A673 (cell line): ENCODE measurements at regions of chr12 and their contacts with region 1.

Region 1: DNA sequence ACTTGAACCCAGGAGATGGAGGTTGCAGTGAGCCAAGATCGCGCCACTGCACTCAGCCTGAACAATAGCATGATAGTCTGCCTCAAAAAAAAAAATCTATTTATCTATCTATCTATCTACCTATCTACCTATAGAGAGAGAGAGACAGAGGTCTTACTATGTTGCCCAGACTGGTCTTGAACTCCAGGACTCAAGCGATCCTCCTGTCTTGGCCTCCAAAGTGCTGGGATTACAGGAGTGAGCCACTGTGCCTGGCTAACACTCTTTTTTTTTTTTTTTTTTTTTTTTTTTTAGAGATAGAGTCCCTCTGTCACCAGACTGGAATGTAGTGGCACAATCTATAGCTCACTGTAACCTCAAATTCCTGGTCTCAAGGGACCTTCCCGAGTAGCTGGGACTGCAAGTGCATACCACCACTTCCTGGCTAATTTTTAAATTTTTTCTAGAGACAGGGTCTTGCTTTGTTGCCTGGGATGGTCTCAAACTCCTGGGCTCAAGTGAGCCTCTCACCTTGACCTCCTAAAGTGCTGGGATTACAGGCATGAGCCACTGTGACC is 1.9 kb downstream of the FAM186A start:
- DNase-seq: peak; percentile 47
- H3K4me3 ChIP-seq: no peak overlapping the region
- H3K27ac ChIP-seq: no peak overlapping the region
- H3K4me1 ChIP-seq: no peaks in the 10 kb centered on the region
- H3K27me3 ChIP-seq: no peaks in the 10 kb centered on the region
- CTCF ChIP-seq: no peak

Region 2: DNA sequence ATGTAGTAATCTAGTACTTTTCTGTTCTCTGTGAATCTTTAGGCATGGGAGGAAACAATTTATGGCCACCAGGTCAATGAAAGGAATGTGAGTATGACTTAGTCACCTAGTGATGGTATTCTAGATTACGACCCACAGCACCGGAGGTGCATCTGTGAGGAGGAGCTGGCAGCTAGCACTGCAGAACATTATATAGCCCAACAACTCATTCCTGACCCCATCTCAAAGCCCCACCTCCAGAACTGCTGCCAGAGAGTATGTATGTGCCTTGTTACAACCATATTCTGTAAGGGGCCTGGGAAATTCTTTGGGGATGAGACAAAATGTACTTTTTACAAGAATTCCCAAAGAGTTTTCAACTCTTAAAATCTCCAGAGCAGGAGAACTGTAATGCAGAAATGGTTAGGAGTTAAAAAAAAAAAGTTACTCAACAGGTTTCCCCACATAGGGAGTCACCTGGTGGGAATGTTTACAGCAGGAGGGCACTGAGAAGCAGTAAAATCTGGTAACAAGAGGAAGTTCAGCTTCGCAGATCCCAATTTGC is 192.5 kb before region 1 on chr12:
- CTCF ChIA-PET with region 1: no interaction called
- POLR2A ChIA-PET with region 1: no interaction called
- intact Hi-C with region 1: no loop called
- DNase-seq: no peak
- H3K4me3 ChIP-seq: no peak overlapping the region
- H3K27ac ChIP-seq: no peak overlapping the region
- H3K4me1 ChIP-seq: no peaks in the 10 kb centered on the region
- H3K27me3 ChIP-seq: no peaks in the 10 kb centered on the region
- CTCF ChIP-seq: no peak

Region 3: DNA sequence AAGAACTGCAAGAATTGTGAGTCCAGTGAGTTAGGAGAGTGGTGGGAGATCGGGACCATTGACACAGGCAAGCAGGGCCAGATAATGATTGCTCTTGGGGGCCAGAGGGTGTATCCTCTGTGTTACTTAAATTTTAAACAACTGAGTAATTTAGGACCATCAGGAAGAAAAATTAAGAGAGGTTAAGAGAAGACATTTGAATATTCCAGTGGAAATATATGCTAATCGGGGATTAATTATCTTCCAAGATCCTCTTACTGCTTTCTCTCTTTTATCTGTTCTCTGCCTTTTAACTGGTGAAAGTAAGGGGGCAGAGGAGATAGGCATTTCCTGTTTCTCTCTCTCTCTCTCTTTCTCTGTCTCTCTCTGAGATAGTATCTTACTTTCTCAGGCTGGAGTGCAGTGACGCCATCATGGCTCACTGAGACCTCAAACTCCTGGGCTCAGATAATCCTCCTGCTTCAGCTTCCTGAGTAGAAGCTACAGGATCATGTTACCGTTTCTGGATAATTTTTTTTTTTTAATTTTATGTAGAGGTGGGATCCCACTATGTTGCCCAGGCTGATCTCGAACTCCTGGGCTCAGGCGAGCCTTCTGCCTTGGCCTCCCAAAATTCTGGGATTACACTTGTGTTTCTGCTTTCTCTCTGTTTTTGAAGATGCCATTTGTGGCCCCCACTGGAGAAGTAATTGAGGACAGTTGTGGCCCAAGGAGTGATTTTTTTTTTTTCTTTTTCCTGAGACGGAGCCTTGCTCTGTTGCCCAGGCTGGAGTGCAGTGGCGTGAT is 195.3 kb after region 1 on chr12:
- CTCF ChIA-PET with region 1: no interaction called
- POLR2A ChIA-PET with region 1: interaction called, 13 read pairs
- intact Hi-C with region 1: no loop called
- DNase-seq: peak; percentile 97
- H3K4me3 ChIP-seq: peak overlapping the region; percentile 9
- H3K27ac ChIP-seq: peak overlapping the region; percentile 95
- H3K4me1 ChIP-seq: peaks cover 37% of the 10 kb centered on the region
- H3K27me3 ChIP-seq: no peaks in the 10 kb centered on the region
- CTCF ChIP-seq: no peak

Region 4: DNA sequence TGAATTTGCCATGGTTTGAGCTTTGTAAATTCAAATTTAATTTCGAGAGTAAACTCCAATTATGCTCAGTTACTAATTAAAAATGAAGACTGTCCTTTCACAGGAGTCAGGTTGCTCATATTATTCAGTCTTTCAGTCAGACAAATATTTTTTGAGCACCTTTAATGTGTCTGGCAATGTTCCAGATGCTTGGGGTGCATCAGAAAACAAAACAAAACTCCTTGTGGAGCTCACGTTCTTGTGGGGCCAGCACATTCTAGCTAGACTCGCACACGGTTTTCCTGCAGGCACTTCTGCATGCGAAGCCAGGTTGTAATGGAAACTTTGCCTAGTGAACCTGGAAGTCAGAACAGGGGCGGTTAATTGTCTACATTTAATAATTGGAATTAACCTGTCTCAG is 305.4 kb after region 1 on chr12:
- CTCF ChIA-PET with region 1: no interaction called
- POLR2A ChIA-PET with region 1: no interaction called
- intact Hi-C with region 1: no loop called
- DNase-seq: no peak
- H3K4me3 ChIP-seq: no peak overlapping the region
- H3K27ac ChIP-seq: no peak overlapping the region
- H3K4me1 ChIP-seq: peaks cover 4% of the 10 kb centered on the region
- H3K27me3 ChIP-seq: no peaks in the 10 kb centered on the region
- CTCF ChIP-seq: no peak

Region 5: GRCh38 chr12:51488281-51488680 is 1093.7 kb after region 1 on chr12:
- CTCF ChIA-PET with region 1: no interaction called
- POLR2A ChIA-PET with region 1: no interaction called
- intact Hi-C with region 1: no loop called
- DNase-seq: no peak
- H3K4me3 ChIP-seq: no peak overlapping the region
- H3K27ac ChIP-seq: no peak overlapping the region
- H3K4me1 ChIP-seq: peaks cover 2% of the 10 kb centered on the region
- H3K27me3 ChIP-seq: no peaks in the 10 kb centered on the region
- CTCF ChIP-seq: no peak